ENCODE measurements at regions of chr16 and their contacts with region 1.

Region 1: GRCh38 chr16:55465077-55465896 is 13.7 kb upstream of the MMP2 start:
- DNase-seq: peak; percentile 88

Region 2: GRCh38 chr16:55701442-55702319 is 236.4 kb after region 1 on chr16:
- in situ Hi-C with region 1: loop called (anchors 10 kb)
- DNase-seq: peak; percentile 57

Region 3: DNA sequence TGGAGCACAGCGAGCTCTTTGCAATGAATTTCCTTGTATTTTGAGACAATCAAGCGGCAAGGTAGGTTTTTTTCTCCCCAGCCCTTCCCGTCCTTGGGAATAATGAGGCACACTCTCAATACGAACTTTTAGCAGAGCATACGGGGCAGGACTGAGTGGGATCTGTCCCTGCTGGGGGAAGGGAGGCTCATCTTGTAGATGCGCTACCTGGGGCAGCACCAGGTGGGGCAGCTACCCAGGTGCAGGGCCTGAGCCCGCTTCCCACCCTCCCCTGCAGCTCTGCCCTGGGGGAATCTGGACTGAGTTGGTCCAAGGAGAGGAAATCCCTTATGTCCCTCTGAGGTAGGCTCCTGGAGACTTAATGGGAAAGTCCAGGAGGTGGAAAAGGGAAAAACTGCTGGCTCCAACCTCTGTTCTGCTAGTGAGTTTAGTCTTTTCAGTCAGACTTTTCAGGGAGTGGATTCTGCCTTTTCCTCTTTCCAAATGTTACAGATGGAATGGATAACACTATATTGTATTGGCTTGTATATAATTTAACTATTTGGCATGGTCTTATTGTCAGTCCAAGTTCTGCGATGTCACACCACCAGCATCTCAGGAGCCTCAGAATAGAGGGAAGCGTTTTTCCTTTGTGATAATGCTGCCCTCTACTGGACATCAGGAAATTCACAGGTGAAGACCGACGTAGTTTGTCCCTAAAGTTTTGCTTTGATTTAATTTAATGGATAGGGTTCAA is 377.2 kb after region 1 on chr16:
- in situ Hi-C with region 1: loop called (anchors 25 kb)
- DNase-seq: peak; percentile 55

Region 4: DNA sequence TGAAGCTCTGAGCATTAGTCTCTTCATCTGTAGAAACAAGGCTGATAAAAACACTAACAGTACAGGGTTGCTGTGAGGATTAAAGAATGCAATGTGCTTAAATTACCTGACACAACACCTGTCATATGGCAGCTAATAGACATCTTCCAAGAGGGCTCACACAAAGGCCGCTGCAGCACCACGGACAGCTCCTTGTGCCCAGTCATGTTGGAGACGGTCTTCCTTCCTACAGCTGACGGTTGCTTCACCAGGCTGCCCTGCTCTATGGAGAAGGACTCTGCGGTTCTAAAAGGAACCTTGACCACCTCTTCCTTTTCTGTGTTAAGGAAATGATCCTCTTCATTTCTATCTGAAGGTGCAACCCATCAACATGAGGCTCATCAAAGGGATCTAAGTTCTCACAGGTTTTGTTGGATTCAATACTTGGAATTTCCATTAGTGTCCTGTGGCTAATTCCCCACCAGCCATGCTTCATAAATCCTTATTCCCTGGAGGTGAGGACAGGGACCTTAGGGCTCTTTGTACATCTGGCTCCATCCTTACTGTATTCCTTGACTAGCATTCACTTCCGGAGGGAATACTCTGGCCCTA is 548.8 kb after region 1 on chr16:
- in situ Hi-C with region 1: no loop called
- DNase-seq: peak; percentile 33

Measured in KBM-7 (cell line).